Right cardiac atrium (tissue), 5 donors: ENCODE measurements at regions of chr20 and their contacts with region 1.

Region 1: GRCh38 chr20:34312544-34313217 is 9.5 kb upstream of the AHCY start:
- DNase-seq: peak; percentile 86 to 92 (median 91)
- ATAC-seq: peak; percentile 96 to 97
- H3K4me3 ChIP-seq: no peak overlapping the region
- H3K27ac ChIP-seq: no peak overlapping the region
- H3K4me1 ChIP-seq: no peaks in the 10 kb centered on the region
- H3K27me3 ChIP-seq: no peaks in the 10 kb centered on the region

Region 2: DNA sequence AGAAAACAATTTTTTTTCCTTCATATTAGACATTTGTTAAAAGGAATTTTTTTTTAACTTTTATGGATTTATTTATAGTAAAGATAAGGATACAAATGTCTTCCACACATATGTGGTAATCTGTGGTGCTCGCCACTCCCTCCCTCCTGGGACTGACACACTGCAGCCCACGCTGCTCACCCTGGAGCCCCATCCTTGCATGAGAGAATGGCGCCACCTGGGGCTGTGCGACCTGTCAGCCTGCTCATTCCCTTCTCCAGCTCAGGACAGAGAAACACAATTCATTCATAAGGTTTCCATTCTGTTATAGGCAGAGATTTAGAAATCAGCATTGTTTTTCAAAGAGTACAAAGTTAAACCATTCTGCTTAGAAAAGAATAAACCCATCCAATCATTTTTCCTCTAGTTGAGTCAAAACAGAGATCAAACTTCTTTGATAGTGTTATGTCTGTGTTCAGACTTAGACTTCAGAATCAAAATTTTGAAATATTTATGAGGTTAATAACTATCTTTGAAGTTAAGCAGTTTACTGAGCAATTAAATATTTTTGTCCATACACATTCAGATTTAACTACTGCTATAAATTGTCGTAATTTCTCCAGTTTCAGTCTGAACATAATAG is 160.7 kb after region 1 on chr20:
- intact Hi-C with region 1: loop called (anchors 1 to 10 kb)
- DNase-seq: peak; percentile 42 to 78 (median 77)
- ATAC-seq: peak; percentile 81 to 84
- H3K4me3 ChIP-seq: no peak overlapping the region
- H3K27ac ChIP-seq: no peak overlapping the region
- H3K4me1 ChIP-seq: no peaks in the 10 kb centered on the region
- H3K27me3 ChIP-seq: no peaks in the 10 kb centered on the region

Region 3: DNA sequence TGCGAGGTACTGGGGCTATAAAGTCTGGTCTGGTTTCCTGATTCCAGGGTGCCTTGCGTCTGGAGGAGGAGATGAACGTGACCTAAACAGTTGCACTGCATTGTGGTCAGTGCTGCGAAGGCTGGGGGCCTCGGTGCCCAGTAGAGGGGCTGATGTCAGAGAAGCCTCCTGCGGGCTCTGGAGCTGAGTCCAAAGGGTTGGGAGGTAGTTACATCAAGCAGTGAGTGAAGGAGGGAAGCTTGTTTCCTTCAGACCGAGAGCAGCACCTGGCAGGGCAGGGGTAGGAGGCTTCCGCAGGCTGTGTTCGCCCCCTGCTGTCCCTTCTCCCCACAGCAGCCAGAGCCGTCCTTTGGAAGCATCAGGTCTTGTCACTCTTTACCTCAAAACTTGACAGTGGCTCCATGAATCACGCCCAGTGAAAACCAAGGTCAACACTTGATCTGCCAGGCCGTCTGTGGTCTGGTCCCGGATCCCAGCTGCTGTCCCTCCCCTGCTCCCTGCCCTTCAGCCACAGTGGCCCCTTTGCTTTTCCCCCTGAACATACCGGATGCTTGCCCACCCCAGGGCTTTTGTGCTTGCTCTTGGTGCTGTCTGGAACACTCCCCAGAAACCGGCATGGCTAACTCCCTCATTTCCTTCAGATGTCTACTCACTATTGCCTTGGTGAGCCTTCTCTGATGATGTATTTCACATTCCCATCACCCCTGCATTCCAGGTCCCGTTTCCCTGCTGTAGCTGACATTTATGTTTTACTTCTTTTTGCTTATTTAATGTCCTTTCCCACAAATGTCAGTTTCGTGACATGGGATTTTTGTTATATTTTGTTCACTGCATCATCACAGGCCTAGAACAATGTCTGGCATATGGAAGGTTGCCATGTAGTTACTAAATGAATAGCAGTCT is 210.5 kb after region 1 on chr20:
- intact Hi-C with region 1: loop called in 1 of 4 experiments (anchors 10 kb)
- DNase-seq: no peak
- ATAC-seq: peak in 1 of 2 donors; percentile 30
- H3K4me3 ChIP-seq: no peak overlapping the region
- H3K27ac ChIP-seq: peak overlapping the region; percentile 81
- H3K4me1 ChIP-seq: peaks cover 6% of the 10 kb centered on the region
- H3K27me3 ChIP-seq: no peaks in the 10 kb centered on the region

Region 4: DNA sequence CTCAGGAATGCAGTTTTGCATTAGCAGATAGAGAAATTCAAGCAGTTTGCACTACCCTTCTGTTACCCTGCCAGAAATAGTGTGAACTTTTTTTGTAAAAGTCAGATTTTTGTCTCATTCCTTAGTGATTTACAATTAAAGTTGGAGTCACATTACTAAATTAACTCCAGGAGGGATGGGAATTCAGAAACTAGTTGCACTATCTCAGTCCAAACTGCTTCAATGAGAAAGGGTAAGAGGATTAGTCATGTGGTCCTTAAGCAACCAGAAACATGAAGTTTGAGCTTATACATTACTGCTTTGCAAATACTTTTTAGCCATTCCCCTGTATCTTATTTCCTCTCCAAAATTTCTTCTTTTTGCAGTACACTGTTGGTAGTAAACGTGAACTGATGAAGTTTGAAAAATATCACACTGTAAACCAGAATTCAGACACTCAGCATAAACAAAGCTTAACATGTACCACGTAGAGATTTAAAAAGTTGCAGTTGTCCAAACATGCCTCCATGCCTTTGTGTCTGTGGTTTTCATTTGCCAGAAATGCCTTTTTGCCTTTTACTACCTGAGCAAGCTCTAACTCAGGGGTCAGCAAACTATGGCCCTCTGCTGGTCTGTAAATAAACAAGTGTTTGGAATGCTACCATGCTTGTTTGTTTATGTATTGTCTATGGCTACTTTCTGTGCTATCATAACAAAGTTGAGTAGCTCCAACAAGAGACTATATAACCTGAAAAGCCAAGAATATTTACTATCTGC is 441.2 kb after region 1 on chr20:
- intact Hi-C with region 1: loop called in 1 of 4 experiments (anchors 10 kb)
- DNase-seq: no peak
- ATAC-seq: no peak
- H3K4me3 ChIP-seq: no peak overlapping the region
- H3K27ac ChIP-seq: no peak overlapping the region
- H3K4me1 ChIP-seq: no peaks in the 10 kb centered on the region
- H3K27me3 ChIP-seq: no peaks in the 10 kb centered on the region